Gastrocnemius medialis (tissue), 4 donors: ENCODE measurements at regions of chr1 and their contacts with region 1.

Region 1: GRCh38 chr1:243343970-243344937 is 88.4 kb downstream of the SDCCAG8 start:
- DNase-seq: no peak
- ATAC-seq: peak; percentile 52 to 71
- H3K4me3 ChIP-seq: no peak overlapping the region
- H3K27ac ChIP-seq: no peak overlapping the region
- H3K4me1 ChIP-seq: no peaks in the 10 kb centered on the region
- H3K27me3 ChIP-seq: no peaks in the 10 kb centered on the region
- CTCF ChIP-seq: peak; percentile 54 to 81 (median 68)
- POLR2A ChIP-seq: no peak

Region 2: DNA sequence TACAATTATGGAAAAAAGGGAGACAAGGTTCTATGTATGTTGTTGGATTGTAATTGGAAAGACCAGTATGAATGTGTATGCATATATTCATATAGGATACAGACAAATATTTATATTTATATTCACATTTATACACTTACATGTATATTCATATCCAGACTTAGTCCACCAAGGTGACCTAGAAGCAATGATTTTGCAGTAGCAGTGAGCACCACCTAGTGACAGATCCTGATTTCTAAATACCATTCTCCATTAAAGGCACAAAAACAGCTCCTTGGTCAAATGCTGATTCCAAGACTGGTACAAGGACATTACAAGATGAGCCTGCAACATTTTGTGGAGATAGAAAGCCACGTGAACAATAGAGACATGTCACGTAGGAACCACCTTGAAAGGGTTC is 65.0 kb after region 1 on chr1:
- in situ Hi-C with region 1: no loop called
- intact Hi-C with region 1: loop called (anchors 5 kb)
- DNase-seq: no peak
- ATAC-seq: peak in 1 of 2 donors; percentile 65
- H3K4me3 ChIP-seq: no peak overlapping the region
- H3K27ac ChIP-seq: no peak overlapping the region
- H3K4me1 ChIP-seq: no peaks in the 10 kb centered on the region
- H3K27me3 ChIP-seq: no peaks in the 10 kb centered on the region
- CTCF ChIP-seq: peak in 1 of 5 experiments; percentile 31
- POLR2A ChIP-seq: no peak

Region 3: DNA sequence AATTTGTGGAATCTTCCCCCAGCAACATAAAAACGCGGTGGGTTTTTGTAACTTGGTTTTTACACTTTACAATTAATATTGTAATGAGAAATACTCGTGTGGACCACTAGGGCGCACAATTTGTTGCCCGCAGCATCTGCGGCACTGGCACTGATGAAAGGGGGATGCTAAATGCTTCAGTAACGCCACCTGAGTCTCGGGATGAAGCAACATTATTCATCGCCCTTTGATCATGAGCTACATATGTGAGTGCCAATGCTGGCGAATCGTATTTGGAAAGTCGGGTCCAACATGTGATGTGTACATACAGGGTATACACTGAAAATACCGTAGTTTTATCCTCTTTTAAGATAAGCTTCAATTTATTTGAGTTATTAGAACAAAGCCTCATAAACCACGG is 1457.0 kb after region 1 on chr1:
- in situ Hi-C with region 1: no loop called
- intact Hi-C with region 1: no loop called
- DNase-seq: no peak
- ATAC-seq: no peak
- H3K4me3 ChIP-seq: no peak overlapping the region
- H3K27ac ChIP-seq: no peak overlapping the region
- H3K4me1 ChIP-seq: no peaks in the 10 kb centered on the region
- H3K27me3 ChIP-seq: no peaks in the 10 kb centered on the region
- CTCF ChIP-seq: peak; percentile 18 to 64 (median 48)
- POLR2A ChIP-seq: no peak